BJ (cell line): ENCODE measurements at regions of chr6 and their contacts with region 1.

Region 1: DNA sequence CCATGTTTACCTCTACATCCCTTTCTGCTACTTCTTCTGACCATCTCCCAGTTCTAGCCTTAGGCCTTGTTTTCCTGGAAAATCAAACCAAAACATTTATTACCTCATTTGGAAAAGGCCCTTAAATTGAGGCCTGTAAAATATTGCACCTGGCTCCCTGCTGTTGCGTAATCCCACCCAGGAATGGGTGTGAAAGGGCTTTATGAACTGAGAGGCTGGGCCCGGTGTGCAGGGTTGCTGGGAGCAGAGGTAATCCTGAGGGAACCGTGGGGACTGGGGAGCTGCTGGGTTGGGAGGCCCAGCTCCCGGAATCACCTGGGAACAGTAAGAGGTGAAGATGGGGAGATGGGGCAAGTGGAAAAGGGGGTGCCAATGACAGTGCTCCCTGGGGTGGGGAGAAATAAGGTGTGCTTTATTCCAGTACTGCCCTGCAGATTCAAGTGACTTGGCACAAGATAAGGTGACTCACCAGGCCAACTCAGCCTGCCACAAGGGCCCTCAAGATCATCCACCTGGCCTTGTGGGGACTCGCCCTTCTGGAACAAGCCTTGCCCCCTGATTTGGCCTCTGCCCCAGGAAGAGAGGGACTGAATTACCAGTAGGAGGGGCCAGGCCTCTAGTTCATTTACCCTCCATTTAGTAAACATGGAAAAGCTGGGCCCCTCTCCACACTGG is 44.2 kb downstream of the KCNK5 start:
- DNase-seq: no peak
- H3K4me3 ChIP-seq: no peak overlapping the region
- H3K27me3 ChIP-seq: no peaks in the 10 kb centered on the region
- CTCF ChIP-seq: no peak

Region 2: GRCh38 chr6:39166189-39166911 is 18.7 kb before region 1 on chr6:
- CTCF ChIA-PET with region 1: interaction called, 15 read pairs
- POLR2A ChIA-PET with region 1: no interaction called
- DNase-seq: no peak
- H3K4me3 ChIP-seq: no peak overlapping the region
- H3K27me3 ChIP-seq: no peaks in the 10 kb centered on the region; the same call in 1 of the 2 replicates
- CTCF ChIP-seq: peak; percentile 86